CD8-positive, alpha-beta T cell (primary cell): ENCODE measurements at regions of chr2 and their contacts with region 1.

Region 1: DNA sequence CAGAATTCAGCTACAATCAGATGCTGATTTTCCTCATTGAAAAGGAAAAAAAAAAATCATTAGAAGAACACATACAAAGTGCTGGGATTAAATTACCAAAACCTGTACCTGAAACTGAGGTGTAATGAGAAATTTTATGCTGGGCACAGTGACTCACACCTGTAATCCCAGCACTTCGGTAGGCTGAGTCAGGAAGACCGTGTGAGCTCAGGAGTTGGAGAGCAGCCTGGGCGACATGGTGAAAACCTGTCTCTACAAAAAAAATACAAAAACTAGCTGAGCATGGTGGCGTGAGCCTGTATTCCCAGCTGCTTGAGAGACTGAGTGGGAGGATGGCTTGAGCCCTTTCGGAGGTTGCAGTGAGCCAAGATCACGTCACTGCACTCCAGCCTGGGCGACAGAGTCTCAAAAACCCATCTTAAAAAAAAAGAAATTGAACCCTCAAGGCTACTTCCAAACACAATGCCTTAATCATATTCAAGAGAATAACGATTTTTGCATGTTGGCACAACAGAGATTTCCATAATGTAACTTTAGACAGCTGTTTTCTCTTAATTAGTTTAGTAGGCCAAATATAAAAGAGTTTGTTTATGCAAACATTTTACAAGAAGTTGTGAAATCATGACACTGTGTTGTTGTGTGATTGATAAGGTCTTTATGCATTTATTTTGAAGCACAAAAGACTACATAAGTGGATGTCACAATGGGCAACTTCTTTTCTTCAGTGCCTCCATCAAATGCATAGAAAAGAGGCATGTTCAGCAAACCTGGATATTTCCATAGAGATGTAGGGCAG is 63.9 kb downstream of the FAM161A start:
- DNase-seq: no peak
- ATAC-seq: no peak
- H3K4me3 ChIP-seq: no peak overlapping the region
- H3K4me3 Mint-ChIP-seq: no peak overlapping the region
- H3K27ac ChIP-seq: no peak overlapping the region
- H3K27ac Mint-ChIP-seq: no peak overlapping the region
- H3K4me1 ChIP-seq: no peaks in the 10 kb centered on the region
- H3K4me1 Mint-ChIP-seq: peaks cover 5% of the 10 kb centered on the region
- H3K27me3 ChIP-seq: no peaks in the 10 kb centered on the region
- H3K27me3 Mint-ChIP-seq: peaks cover 6% of the 10 kb centered on the region
- CTCF ChIP-seq: no peak

Region 2: DNA sequence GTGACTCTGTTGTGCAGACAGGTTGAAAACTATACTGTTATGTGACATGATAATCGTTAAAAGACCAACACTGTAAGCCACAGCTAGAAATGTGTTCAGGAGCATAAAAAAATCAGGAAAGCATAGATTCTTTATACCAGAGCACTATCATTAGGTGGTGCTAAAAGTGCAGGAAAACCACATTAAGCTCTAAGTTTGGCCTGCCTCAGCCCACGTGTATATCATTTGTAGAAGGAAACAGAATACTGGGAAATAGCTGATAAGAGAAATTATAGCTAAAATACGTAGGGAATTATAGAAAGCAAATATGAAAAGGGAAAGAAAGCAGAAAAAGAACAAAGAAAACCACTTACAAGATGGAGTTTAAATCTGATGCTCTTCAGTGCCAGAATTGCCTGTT is 654.5 kb before region 1 on chr2:
- CTCF ChIA-PET with region 1: no interaction called
- POLR2A ChIA-PET with region 1: no interaction called
- intact Hi-C with region 1: loop called in 1 of 2 experiments (anchors 10 kb)
- DNase-seq: peak in 2 of 9 experiments; percentile 34 to 50
- ATAC-seq: no peak
- H3K4me3 ChIP-seq: no peak overlapping the region
- H3K4me3 Mint-ChIP-seq: no peak overlapping the region
- H3K27ac ChIP-seq: no peak overlapping the region
- H3K27ac Mint-ChIP-seq: no peak overlapping the region
- H3K4me1 ChIP-seq: no peaks in the 10 kb centered on the region
- H3K4me1 Mint-ChIP-seq: peaks cover 2% of the 10 kb centered on the region
- H3K27me3 ChIP-seq: no peaks in the 10 kb centered on the region
- H3K27me3 Mint-ChIP-seq: no peaks in the 10 kb centered on the region
- CTCF ChIP-seq: no peak

Region 3: GRCh38 chr2:61504949-61505348 is 285.1 kb before region 1 on chr2:
- CTCF ChIA-PET with region 1: no interaction called
- POLR2A ChIA-PET with region 1: no interaction called
- intact Hi-C with region 1: loop called in 1 of 2 experiments (anchors 10 kb)
- DNase-seq: no peak
- ATAC-seq: no peak
- H3K4me3 ChIP-seq: no peak overlapping the region
- H3K4me3 Mint-ChIP-seq: no peak overlapping the region
- H3K27ac ChIP-seq: no peak overlapping the region
- H3K27ac Mint-ChIP-seq: no peak overlapping the region
- H3K4me1 ChIP-seq: no peaks in the 10 kb centered on the region
- H3K4me1 Mint-ChIP-seq: peaks cover 23% of the 10 kb centered on the region
- H3K27me3 ChIP-seq: no peaks in the 10 kb centered on the region
- H3K27me3 Mint-ChIP-seq: no peaks in the 10 kb centered on the region
- CTCF ChIP-seq: no peak